GM18951 (cell line): ENCODE measurements at regions of chr6 and their contacts with region 1.

Region 1: GRCh38 chr6:121305957-121306607 is 28.2 kb downstream of the TBC1D32 start:
- POLR2A ChIP-seq: no peak

Region 2: GRCh38 chr6:120157873-120158272 is 1148.2 kb before region 1 on chr6:
- in situ Hi-C with region 1: no loop called
- POLR2A ChIP-seq: no peak

Region 3: DNA sequence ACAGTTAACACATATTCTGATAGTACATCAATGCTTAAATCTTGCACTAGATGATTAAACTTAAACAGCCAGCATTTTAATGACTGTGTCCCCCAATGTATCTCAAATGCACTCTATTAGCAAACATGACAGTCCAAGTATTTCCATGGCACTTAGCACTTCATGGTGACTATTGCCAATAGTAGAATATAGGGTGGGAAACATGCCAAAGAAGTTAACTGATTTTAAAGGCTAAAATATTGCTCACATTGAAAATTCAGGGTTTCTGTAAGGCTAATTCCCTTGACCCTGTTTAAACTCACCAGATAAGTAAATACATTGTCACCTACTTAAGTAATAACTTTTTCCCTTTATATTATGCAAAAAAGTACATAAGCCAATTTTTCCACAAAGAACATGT is 238.7 kb before region 1 on chr6:
- in situ Hi-C with region 1: loop called (anchors 10 kb)
- POLR2A ChIP-seq: no peak